Endothelial cell of umbilical vein (primary cell): ENCODE measurements at regions of chr6 and their contacts with region 1.

Region 1: DNA sequence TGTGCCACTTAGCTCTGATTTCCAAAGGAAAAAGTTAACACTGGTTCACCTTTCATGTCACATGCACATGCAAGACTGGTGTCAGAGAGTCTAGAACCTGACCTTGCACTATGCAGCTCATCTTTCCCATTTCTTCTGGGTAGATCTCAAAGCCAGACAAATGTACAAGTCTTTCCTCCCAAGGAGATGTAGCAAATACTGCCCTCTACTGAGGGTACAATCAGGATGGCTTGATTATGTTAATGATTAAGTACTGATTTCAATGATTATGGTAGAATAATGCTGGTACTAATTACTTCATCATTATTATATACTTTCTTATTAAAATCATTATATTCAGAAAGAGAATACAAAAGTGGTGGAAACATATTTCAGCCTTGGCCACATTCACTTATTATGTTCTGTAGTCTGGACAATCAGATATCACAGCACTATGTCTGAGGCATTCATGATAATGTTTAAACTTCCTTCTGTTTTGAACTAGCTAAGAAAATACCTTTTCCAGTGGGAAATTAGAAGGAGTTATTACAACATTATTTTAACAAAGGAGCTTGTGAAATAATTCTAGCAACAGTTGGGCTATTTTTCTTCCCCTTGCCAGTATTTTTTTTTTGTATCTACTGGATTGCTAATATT is 68.5 kb upstream of the FOXO3 start:
- DNase-seq: peak; percentile 77
- H3K4me3 ChIP-seq: no peak overlapping the region
- H3K27ac ChIP-seq: no peak overlapping the region
- H3K4me1 ChIP-seq: no peaks in the 10 kb centered on the region
- H3K27me3 ChIP-seq: no peaks in the 10 kb centered on the region
- CTCF ChIP-seq: peak; percentile 47 to 54
- POLR2A ChIP-seq: no peak

Region 2: DNA sequence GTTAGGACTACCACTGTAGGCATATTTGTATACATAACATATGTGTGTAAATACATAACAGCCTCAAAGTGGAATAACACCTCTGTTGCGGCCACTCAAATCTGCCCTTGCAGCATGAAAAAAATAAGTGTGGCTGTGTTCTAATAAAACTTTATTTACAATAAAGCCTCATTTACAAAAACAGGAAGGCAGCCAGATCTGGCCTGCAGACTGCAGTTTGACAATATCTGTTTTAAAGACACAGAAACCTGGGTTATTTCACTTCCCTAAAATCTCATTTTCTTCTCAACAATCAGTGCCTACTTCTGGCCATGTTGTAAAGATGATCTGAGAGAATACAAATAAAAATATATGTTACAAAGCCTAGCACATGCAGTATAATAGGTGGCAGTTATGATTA is 614.3 kb before region 1 on chr6:
- CTCF ChIA-PET with region 1: no interaction called
- POLR2A ChIA-PET with region 1: no interaction called
- dilution Hi-C with region 1: no loop called
- intact Hi-C with region 1: no loop called
- DNase-seq: no peak
- H3K4me3 ChIP-seq: no peak overlapping the region
- H3K27ac ChIP-seq: no peak overlapping the region
- H3K4me1 ChIP-seq: no peaks in the 10 kb centered on the region
- H3K27me3 ChIP-seq: no peaks in the 10 kb centered on the region
- CTCF ChIP-seq: no peak
- POLR2A ChIP-seq: no peak

Region 3: GRCh38 chr6:108163267-108163643 is 329.0 kb before region 1 on chr6:
- CTCF ChIA-PET with region 1: interaction called, 20 read pairs
- POLR2A ChIA-PET with region 1: no interaction called
- dilution Hi-C with region 1: no loop called
- intact Hi-C with region 1: loop called (anchors 5 kb)
- DNase-seq: no peak
- H3K4me3 ChIP-seq: no peak overlapping the region
- H3K27ac ChIP-seq: no peak overlapping the region
- H3K4me1 ChIP-seq: peaks cover 4% of the 10 kb centered on the region
- H3K27me3 ChIP-seq: peaks cover 92 to 100% of the 10 kb centered on the region in 2 experiments
- CTCF ChIP-seq: no peak
- POLR2A ChIP-seq: no peak

Region 4: GRCh38 chr6:108235127-108235526 is 257.1 kb before region 1 on chr6:
- CTCF ChIA-PET with region 1: interaction called, 12 read pairs
- POLR2A ChIA-PET with region 1: no interaction called
- dilution Hi-C with region 1: no loop called
- intact Hi-C with region 1: no loop called
- DNase-seq: no peak
- H3K4me3 ChIP-seq: no peak overlapping the region
- H3K27ac ChIP-seq: no peak overlapping the region
- H3K4me1 ChIP-seq: no peaks in the 10 kb centered on the region
- H3K27me3 ChIP-seq: no peaks in the 10 kb centered on the region
- CTCF ChIP-seq: no peak
- POLR2A ChIP-seq: no peak

Region 5: GRCh38 chr6:108302386-108302785 is 189.9 kb before region 1 on chr6:
- CTCF ChIA-PET with region 1: interaction called, 12 read pairs
- POLR2A ChIA-PET with region 1: no interaction called
- dilution Hi-C with region 1: no loop called
- intact Hi-C with region 1: no loop called
- DNase-seq: no peak
- H3K4me3 ChIP-seq: no peak overlapping the region
- H3K27ac ChIP-seq: no peak overlapping the region
- H3K4me1 ChIP-seq: no peaks in the 10 kb centered on the region
- H3K27me3 ChIP-seq: no peaks in the 10 kb centered on the region
- CTCF ChIP-seq: no peak
- POLR2A ChIP-seq: no peak

Region 6: DNA sequence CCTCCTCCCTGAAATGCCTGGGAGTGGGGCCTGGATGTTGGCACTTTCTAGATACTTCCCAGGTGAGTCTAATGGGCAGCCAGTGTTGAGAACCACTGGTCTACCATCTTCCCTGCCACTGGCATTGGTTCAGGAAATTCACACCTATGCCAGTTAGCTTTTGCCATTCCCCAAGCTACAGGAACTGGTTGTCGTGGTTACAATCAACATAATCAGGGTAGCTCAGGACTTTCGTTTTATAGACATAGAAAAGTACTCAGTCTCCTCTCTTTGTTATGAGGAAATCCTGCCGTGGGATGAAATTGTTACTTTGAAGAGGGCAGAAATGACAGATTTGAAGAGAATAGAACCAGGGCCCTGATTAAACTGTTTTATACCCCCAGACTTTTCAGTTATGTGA is 59.5 kb before region 1 on chr6:
- CTCF ChIA-PET with region 1: interaction called, 12 read pairs
- POLR2A ChIA-PET with region 1: no interaction called
- dilution Hi-C with region 1: no loop called
- intact Hi-C with region 1: no loop called
- DNase-seq: peak; percentile 73
- H3K4me3 ChIP-seq: no peak overlapping the region
- H3K27ac ChIP-seq: no peak overlapping the region
- H3K4me1 ChIP-seq: no peaks in the 10 kb centered on the region
- H3K27me3 ChIP-seq: no peaks in the 10 kb centered on the region
- CTCF ChIP-seq: no peak
- POLR2A ChIP-seq: no peak

Region 7: GRCh38 chr6:108476847-108477430 is 15.3 kb before region 1 on chr6:
- CTCF ChIA-PET with region 1: interaction called, 26 read pairs
- POLR2A ChIA-PET with region 1: no interaction called
- dilution Hi-C with region 1: no loop called
- intact Hi-C with region 1: no loop called
- DNase-seq: no peak
- H3K4me3 ChIP-seq: no peak overlapping the region
- H3K27ac ChIP-seq: no peak overlapping the region
- H3K4me1 ChIP-seq: no peaks in the 10 kb centered on the region
- H3K27me3 ChIP-seq: no peaks in the 10 kb centered on the region
- CTCF ChIP-seq: no peak
- POLR2A ChIP-seq: no peak